Activated CD8-positive, alpha-beta T cell treated with anti-CD3 and anti-CD28 coated beads, Interleukin-2, amount 10 ng/mL, durations not matched to agents 7 days and 5 days (primary cell): ENCODE measurements at regions of chr1 and their contacts with region 1.

Region 1: DNA sequence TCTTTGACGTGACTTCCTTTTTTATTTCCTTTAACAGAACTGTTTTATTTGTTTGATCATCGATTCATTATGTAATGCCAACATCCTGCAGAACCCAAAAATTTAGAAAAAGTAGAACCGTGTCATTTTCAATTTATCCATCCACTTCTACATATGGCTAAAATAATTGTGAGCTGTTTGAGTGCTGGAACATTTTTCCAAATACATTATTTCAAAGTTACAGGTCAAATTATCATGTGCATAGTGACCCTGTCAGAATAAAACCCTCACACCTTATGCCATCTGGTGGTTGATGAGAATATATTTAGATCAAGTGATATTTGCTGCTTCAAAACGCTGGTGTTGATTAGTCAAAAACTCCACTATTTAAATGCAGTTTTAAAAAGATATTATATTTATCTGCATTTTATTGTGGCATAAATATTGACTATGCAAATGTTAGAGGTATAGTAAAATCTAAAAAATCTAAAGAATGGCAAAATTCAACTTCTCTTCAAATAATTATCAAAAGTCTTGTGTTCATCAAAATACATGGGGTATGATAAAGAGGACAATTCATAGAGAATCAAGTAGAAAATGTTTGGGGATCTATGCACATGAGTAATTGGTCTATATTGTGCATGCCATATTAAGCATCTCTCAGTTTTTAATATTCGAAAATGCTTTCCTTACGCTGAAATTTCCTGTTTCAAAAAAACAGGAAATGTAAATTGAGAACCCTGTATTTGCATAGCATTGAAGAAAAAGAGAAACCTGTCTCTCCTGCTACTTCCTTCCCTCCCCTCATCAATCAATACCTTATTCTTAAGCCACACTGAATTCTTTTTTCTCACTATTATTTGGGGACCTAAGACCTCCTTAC is 39.7 kb downstream of the UBE2U start:
- DNase-seq: no peak
- ATAC-seq: peak; percentile 15
- H3K4me3 Mint-ChIP-seq: peak overlapping the region; percentile 35
- H3K27ac Mint-ChIP-seq: peak overlapping the region; percentile 62
- H3K4me1 Mint-ChIP-seq: peaks cover 21% of the 10 kb centered on the region
- H3K27me3 Mint-ChIP-seq: peaks cover 14% of the 10 kb centered on the region

Region 2: GRCh38 chr1:63615768-63616420 is 627.2 kb before region 1 on chr1:
- CTCF ChIA-PET with region 1: interaction called, 24 read pairs
- POLR2A ChIA-PET with region 1: no interaction called
- DNase-seq: peak; percentile 75
- ATAC-seq: peak; percentile 61
- H3K4me3 Mint-ChIP-seq: no peak overlapping the region
- H3K27ac Mint-ChIP-seq: no peak overlapping the region
- H3K4me1 Mint-ChIP-seq: peaks cover 3% of the 10 kb centered on the region
- H3K27me3 Mint-ChIP-seq: no peaks in the 10 kb centered on the region

Region 3: GRCh38 chr1:63691701-63692425 is 551.3 kb before region 1 on chr1:
- CTCF ChIA-PET with region 1: interaction called, 46 read pairs
- POLR2A ChIA-PET with region 1: no interaction called
- DNase-seq: peak; percentile 51
- ATAC-seq: peak; percentile 73
- H3K4me3 Mint-ChIP-seq: no peak overlapping the region
- H3K27ac Mint-ChIP-seq: no peak overlapping the region
- H3K4me1 Mint-ChIP-seq: peaks cover 3% of the 10 kb centered on the region
- H3K27me3 Mint-ChIP-seq: peaks cover 2% of the 10 kb centered on the region

Region 4: DNA sequence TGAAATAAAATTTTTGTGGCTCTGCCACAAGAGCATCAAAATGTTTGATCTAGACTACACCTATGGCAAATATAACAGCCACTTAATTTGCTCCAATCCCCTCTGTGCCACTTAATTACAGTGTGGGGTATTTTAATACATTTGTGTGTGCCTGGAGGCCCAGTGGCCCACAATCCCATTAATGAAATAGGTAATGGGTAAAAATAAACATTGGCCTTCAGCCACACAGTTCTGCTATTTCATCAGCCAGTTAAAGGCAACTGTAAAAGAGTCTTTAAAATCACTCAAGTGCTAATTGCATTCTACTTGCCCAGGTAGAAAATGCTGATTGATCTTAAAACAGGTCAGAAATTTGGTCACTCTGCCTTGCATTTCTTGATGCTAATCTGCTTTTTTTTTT is 191.3 kb before region 1 on chr1:
- CTCF ChIA-PET with region 1: no interaction called
- POLR2A ChIA-PET with region 1: no interaction called
- DNase-seq: no peak
- ATAC-seq: no peak
- H3K4me3 Mint-ChIP-seq: no peak overlapping the region
- H3K27ac Mint-ChIP-seq: no peak overlapping the region
- H3K4me1 Mint-ChIP-seq: no peaks in the 10 kb centered on the region
- H3K27me3 Mint-ChIP-seq: no peaks in the 10 kb centered on the region

Region 5: DNA sequence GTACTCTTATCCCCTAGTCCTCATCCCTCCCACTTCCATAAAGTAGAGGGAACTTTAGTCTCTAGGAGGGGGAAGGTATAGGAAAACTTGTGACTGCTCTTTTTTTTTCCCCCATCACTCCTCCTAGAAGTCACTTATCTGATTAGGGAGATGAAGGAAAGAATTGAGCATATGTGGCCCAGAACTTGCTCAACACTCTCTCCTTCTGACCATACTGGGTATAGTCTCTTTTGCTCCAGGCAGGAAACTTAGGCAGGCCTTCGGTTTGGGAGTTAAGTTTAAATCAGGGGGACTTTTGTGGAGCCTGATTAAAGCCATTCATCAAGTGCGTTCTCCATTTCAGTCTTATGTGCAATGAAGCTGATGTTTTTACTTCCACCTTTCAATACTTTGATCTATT is 33.9 kb before region 1 on chr1:
- CTCF ChIA-PET with region 1: no interaction called
- POLR2A ChIA-PET with region 1: no interaction called
- DNase-seq: no peak
- ATAC-seq: no peak
- H3K4me3 Mint-ChIP-seq: no peak overlapping the region
- H3K27ac Mint-ChIP-seq: no peak overlapping the region
- H3K4me1 Mint-ChIP-seq: no peaks in the 10 kb centered on the region
- H3K27me3 Mint-ChIP-seq: peaks cover 14% of the 10 kb centered on the region